Left ventricle myocardium superior (tissue), 1 donor: ENCODE measurements at regions of chr10 and their contacts with region 1.

Region 1: GRCh38 chr10:130190055-130190736 is 54.0 kb downstream of the GLRX3 start:
- DNase-seq: peak; percentile 95
- ATAC-seq: peak; percentile 93

Region 2: DNA sequence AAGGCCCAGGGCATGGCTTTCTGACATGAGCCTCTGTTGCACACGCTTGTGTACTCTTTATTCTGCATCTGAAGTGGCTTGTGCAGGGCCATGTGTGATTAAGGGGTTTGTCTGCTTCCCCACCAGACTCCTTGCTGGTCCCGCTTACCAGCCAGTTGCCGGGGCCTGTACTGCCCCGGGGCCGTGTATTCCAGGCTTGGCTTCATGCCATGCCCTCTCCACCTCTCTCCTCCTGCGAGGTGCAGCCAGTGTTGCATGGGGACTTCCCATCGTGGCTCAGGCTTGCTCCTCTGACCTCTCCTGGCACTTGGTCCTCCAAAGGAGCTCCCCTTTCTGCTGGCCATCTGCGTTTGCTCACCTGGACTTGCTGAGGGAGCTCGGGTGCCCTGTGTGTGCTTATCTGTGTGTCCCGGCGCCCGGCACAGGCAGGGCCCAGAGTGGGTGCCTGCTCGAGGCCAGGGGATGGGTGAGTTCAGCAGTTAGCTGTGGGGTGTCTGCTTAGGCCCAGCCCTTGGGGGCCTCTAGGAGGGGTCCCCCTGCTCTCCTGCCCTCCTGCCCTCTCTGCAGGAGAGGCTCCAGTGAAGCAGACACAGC is 68.6 kb before region 1 on chr10:
- intact Hi-C with region 1: no loop called
- DNase-seq: no peak
- ATAC-seq: no peak

Region 3: GRCh38 chr10:130715686-130716670 is 525.8 kb after region 1 on chr10:
- intact Hi-C with region 1: no loop called
- DNase-seq: no peak
- ATAC-seq: no peak

Region 4: DNA sequence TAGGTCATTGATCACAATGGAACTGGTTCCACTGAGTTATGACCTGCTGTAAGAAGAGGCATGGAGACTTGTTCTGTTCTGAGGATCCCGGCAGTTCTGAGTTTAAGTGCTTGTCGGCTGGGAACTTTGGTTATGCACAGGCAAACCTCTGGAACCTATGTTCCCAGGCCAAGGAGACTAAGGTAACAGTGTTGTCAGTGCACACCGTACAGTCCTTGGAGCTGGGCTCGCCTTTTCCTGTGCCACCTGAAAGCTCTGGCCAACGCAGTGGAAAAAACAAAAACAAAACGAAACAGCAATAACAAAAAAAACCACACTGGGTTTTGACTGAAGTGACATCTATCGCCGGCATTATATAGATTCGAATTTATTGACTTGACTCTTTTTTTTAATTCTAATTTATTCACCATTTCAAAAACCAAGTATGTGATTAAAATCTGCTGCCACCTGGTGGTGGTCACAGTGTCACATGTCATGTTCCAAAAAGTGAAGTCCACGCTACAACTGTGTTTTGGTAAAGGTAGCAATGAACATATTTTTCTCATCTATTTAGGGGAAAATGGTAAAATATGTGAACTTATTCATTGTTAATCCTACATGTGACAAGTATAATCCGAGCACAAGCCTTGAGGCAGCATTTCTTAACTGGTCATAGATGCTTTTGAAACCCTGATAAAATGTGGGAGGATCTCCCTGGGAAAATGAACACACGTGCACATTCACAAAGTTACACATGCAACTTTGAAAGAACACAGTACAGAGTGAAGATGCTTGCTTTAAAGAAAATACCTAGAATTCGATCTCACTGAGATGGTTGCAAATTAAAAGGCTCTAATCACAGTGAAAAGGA is 1596.8 kb after region 1 on chr10:
- intact Hi-C with region 1: loop called (anchors 10 kb)
- DNase-seq: no peak
- ATAC-seq: no peak